Esophagus squamous epithelium (tissue), 5 donors: ENCODE measurements at regions of chr17 and their contacts with region 1.

Region 1: DNA sequence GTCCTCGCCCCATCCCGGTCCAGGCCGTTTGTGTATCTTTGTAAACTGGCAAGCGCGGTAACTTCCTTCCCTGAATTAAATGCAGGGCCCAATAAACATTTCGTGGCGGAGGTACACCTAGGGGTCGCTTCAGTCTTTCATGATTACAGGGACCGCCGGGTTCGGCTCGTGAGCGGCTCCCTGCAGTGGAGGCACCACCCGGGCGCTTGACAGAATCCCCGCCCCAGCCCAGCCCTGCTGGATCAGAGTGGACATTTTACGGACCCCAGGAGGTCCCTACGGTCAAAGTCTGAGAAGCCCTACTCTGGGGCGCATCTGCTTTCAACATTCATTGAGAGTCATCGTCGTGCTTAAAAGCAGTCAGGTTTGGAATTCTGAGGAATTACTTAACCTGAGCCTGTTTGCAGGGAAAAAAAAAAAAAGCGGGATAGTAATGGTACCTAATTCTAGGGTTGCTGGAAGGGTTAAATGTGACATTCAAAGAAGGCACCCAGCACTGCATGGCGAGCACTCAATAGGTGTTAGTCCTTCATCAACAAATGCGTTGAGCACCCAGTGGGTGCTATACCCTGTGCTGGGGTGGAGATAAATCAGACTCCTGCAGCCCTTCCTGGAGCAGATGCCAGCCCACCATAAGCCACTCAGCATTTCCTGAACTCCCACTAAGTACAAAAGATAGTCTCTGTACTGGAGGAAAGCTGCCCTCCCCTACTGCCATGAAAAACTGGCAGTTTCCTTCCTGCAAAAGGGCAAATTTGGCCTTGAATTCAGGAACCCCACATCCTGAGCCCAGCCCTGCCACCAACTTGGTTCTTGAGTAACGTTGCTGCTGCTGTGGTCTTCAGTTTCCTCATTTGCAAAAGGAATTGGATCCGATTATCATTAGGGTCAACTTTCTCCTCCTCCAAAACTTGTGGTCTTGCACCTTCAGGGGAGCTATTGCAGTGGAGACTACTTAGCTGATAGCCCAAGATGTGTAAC is 658 bp upstream of the DUSP3 start:
- DNase-seq: no peak
- H3K4me3 ChIP-seq: peak overlapping the region; percentile 84 to 100 (median 90)
- H3K27ac ChIP-seq: peak overlapping the region; percentile 98 to 100 (median 98)
- H3K4me1 ChIP-seq: peaks cover 6 to 50% (median 22%) of the 10 kb centered on the region in 3 donors
- H3K27me3 ChIP-seq: peaks cover 0 to 15% (median 0%) of the 10 kb centered on the region in 4 donors
- CTCF ChIP-seq: peak in 1 of 6 experiments; percentile 18
- POLR2A ChIP-seq: no peak

Region 2: DNA sequence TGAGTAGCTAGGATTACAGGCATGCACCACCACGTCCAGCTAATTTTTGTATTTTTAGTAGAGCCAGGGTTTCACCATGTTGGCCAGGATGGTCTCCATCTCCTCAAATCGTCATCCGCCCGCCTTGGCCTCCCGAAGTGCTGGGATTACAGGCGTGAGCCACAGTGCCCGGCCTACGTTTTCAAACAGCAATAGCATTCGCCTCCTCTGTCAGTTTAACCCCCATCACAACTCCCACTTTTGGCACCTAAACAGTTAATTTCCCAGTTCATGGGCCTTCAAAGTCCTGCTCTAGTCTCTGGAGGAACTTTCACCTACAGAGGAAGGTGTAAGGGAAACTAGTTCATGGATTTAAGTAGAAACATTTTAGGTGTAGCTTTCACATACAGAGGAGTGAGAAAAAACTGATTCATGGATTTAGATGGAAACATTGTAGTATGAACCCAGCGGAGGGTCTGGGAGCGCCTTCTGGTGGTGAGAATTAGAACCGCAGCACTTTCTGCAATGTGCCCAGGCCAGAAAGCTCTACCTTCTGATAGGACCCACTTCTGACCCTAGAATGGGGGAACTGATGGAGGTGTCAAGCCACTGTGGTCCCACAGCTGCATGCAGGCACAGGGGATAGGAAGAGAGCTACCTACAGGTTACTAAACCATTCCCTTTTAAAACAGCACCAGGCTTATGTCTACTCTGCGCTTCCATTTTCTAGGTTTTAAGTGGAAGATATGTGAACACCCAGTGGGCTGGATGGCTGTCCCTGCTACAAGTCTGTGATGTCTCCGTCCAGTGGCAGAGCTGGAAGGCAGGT is 105.7 kb before region 1 on chr17:
- intact Hi-C with region 1: no loop called
- DNase-seq: no peak
- H3K4me3 ChIP-seq: no peak overlapping the region
- H3K27ac ChIP-seq: no peak overlapping the region
- H3K4me1 ChIP-seq: peaks cover 13 to 54% (median 36%) of the 10 kb centered on the region in 3 donors
- H3K27me3 ChIP-seq: no peaks in the 10 kb centered on the region
- CTCF ChIP-seq: peak; percentile 77 to 97 (median 95)
- POLR2A ChIP-seq: no peak

Region 3: GRCh38 chr17:43839669-43840101 is 60.2 kb after region 1 on chr17:
- intact Hi-C with region 1: loop called (anchors 5 kb)
- DNase-seq: no peak
- H3K4me3 ChIP-seq: no peak overlapping the region
- H3K27ac ChIP-seq: peak overlapping the region in 3 of 4 donors; percentile 3 to 54 (median 18)
- H3K4me1 ChIP-seq: peaks cover 0 to 29% (median 16%) of the 10 kb centered on the region in 3 donors
- H3K27me3 ChIP-seq: no peaks in the 10 kb centered on the region
- CTCF ChIP-seq: peak in 1 of 6 experiments; percentile 8
- POLR2A ChIP-seq: no peak

Region 4: GRCh38 chr17:43857942-43858600 is 78.6 kb after region 1 on chr17:
- intact Hi-C with region 1: no loop called
- DNase-seq: no peak
- H3K4me3 ChIP-seq: no peak overlapping the region
- H3K27ac ChIP-seq: peak overlapping the region in 1 of 4 donors; percentile 6
- H3K4me1 ChIP-seq: peaks cover 0 to 22% (median 6%) of the 10 kb centered on the region in 3 donors
- H3K27me3 ChIP-seq: peaks cover 0 to 53% (median 0%) of the 10 kb centered on the region in 4 donors
- CTCF ChIP-seq: no peak
- POLR2A ChIP-seq: no peak